ENCODE measurements at regions of chr3 and their contacts with region 1.

Region 1: GRCh38 chr3:71512000-71512399 is 71.5 kb downstream of the FOXP1 start:
- DNase-seq: peak; percentile 63
- ATAC-seq: peak; percentile 97
- H3K4me3 Mint-ChIP-seq: no peak overlapping the region
- H3K27ac Mint-ChIP-seq: no peak overlapping the region
- H3K4me1 Mint-ChIP-seq: peaks cover 18% of the 10 kb centered on the region
- H3K27me3 Mint-ChIP-seq: no peaks in the 10 kb centered on the region

Region 2: GRCh38 chr3:71488391-71488809 is 23.6 kb before region 1 on chr3:
- CTCF ChIA-PET with region 1: interaction called, 13 read pairs
- POLR2A ChIA-PET with region 1: no interaction called
- DNase-seq: no peak
- ATAC-seq: peak; percentile 14
- H3K4me3 Mint-ChIP-seq: peak overlapping the region; percentile 38
- H3K27ac Mint-ChIP-seq: peak overlapping the region; percentile 94
- H3K4me1 Mint-ChIP-seq: peaks cover 87% of the 10 kb centered on the region
- H3K27me3 Mint-ChIP-seq: no peaks in the 10 kb centered on the region